Activated naive CD4-positive, alpha-beta T cell treated with anti-CD3 and anti-CD28 coated beads for 36 hours (primary cell): ENCODE measurements at regions of chr16 and their contacts with region 1.

Region 1: DNA sequence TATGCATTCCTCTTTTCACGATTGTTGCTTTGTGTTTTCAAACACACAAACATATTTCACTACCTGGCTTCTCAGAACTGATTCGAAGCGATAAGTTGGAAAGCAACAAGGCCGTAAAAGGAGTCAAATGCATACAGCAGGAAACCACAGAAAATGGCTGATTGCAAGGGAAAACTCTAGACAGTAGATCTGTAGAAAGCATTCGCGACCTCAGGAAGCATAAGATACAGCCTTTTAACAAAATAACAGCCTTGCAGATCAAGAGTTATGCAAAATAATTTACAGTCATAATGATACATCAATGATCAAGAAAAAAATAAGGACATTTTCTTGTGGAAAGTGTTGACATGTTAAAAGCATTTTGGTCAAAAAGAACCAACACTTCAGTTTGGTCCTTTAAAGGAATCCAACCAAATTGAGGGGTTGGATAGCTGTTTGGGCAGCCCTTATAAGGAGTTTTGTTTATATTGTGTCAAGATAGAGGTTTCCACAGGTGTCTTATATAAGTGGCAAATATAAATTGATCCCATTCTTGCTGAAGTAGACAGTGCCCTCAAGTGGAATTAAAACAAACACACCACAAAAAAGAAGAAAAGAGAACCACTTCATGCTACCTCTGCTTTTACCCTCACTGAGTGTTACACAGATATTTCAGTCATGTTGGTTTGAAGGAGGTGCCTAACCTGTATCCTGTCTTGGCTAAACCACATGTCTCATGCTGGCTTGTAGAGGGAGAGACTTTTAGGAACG is 5.5 kb downstream of the CYLD start:
- DNase-seq: peak; percentile 27
- H3K4me3 Mint-ChIP-seq: peak overlapping the region; percentile 67
- H3K27ac Mint-ChIP-seq: peak overlapping the region; percentile 93
- H3K4me1 Mint-ChIP-seq: peaks cover 62% of the 10 kb centered on the region
- H3K27me3 Mint-ChIP-seq: no peaks in the 10 kb centered on the region

Region 2: DNA sequence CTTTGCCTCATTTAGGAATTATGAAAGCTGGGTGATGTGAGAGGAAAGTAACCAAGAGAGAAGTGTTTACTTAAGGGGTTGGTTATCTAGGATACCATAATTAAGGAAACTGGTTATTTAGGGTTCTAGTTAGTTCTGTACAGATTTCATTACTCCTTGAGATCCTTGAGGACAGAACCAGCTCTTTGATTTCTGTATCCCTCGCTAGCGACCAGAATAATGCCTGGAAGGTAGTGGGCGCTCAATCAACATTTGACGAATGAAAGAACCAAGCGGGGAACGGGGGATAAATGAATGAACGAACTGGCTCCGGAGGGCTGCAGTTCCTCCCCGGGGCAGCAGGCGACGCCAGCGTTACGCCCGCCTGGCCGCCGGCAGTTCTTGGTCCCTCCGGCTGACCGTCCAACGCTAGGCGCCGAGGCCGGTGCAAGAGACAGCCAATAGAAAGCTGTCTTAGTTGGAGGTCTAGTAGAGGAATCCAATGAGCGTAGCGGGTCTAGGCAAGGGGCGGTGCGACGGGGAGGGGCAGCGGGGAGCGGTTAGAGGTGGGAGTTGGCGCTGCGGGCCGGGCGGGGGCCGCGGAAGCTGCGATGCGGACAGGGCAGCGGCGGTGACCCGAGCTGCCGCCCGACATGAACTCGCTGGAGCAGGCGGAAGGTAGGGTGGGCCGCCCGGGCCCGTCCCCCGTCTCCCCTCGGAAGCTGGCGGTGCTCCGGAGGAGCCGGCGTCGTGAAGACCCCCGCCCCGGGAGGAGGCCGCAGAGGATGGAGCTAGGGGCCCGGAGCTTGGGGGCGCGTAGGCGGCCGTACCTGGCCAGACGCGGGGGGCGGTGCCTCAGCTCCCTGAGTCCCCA is 722.5 kb before region 1 on chr16 and contains the start of gene CNEP1R1:
- CTCF ChIA-PET with region 1: no interaction called
- intact Hi-C with region 1: loop called (anchors 2 kb)
- DNase-seq: peak; percentile 94
- H3K4me3 Mint-ChIP-seq: peak within 1 kb of the TSS; percentile 91
- H3K27ac Mint-ChIP-seq: peak within 1 kb of the TSS; percentile 82
- H3K4me1 Mint-ChIP-seq: peaks cover 22% of the 10 kb centered on the region
- H3K27me3 Mint-ChIP-seq: no peaks in the 10 kb centered on the region
- total RNA-seq, gene CNEP1R1: 28.2 to 30.9 TPM

Region 3: DNA sequence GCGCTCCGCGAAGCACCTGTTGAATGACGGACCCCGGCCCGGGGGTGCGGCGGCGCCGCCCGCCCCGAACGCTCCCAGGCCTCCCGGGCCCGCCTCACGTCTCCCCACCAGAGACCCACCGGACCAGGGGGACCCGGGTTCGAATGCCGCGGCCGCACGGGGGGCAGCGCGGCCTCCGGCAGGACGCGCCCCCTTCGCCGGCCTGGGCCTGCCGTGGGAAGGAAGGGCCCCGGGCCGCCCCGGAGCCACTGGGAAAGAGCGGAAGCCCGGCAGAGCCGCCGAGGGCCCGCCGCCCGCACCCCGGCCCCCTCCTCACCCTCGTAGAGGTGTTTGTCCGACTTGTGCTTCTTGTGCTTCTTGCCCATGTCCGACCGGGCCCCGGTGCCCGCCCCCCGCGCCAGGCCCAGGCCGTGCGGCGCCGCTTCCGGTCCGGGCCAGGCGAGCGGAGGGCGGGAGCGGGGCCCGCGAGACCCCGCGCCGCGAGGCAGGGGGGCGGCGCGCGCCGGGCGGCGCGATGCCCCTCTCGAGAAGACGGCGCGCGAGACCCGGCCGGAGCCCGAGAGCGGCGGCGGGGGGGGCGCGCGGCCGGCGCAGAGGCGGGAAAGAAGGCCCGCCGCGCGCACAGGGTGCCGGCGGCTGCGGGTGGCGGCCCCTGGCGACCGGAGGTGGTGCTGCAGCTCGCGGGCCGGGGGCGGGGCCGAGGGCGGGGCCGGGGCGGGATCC is 378.8 kb before region 1 on chr16 and contains the start of gene BRD7:
- CTCF ChIA-PET with region 1: no interaction called
- intact Hi-C with region 1: loop called (anchors 1 kb)
- DNase-seq: peak; percentile 62
- H3K4me3 Mint-ChIP-seq: peak within 1 kb of the TSS; percentile 96
- H3K27ac Mint-ChIP-seq: peak within 1 kb of the TSS; percentile 86
- H3K4me1 Mint-ChIP-seq: peaks cover 46% of the 10 kb centered on the region
- H3K27me3 Mint-ChIP-seq: no peaks in the 10 kb centered on the region
- total RNA-seq, gene BRD7: 96.7 to 101 TPM

Region 4: DNA sequence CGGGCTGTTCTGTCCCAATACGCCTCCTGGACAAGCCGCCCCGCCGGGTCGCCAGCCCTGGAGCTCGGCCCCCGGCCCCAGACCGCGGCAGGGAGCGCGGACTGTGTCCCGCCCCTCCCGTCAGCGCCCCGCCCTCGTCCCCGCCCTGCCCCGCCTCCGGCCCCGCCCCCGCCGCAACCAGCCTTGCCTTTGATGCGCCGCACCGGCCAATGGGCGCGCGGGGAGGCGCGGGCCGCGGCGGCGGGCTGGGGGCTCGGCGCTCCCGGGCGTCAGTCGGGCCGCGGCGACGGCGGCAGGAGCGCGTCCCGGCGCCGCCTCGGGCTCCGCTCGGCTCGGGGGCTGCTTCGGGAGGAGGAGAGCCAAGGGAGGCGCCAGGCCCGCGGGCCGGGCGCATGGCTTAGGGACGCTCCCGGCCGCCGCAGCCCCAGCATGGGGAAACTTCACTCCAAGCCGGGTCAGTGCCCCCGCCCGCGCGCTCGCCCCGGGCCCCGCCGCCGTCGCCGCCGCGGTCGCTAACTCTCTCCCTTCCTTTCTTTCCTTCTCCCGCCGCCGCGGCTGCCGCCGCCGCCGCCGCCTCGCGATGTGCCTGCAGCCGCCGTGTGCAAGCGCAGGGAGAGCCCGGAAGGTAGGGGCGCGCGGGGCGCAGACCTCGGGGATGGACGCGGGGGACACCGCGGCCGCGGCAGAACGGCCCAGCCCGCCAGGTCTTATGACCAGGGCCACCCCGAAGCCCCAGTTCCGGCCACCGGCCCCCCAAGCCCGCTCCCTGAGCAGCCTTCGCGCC is 199.1 kb before region 1 on chr16 and contains the start of gene NKD1:
- CTCF ChIA-PET with region 1: no interaction called
- intact Hi-C with region 1: loop called (anchors 1 kb)
- DNase-seq: peak; percentile 68
- H3K4me3 Mint-ChIP-seq: peak within 1 kb of the TSS; percentile 85
- H3K27ac Mint-ChIP-seq: no peak within 1 kb of the TSS
- H3K4me1 Mint-ChIP-seq: peaks cover 18% of the 10 kb centered on the region
- H3K27me3 Mint-ChIP-seq: no peaks in the 10 kb centered on the region
- total RNA-seq, gene NKD1: 2.6 to 3.2 TPM

Region 5: DNA sequence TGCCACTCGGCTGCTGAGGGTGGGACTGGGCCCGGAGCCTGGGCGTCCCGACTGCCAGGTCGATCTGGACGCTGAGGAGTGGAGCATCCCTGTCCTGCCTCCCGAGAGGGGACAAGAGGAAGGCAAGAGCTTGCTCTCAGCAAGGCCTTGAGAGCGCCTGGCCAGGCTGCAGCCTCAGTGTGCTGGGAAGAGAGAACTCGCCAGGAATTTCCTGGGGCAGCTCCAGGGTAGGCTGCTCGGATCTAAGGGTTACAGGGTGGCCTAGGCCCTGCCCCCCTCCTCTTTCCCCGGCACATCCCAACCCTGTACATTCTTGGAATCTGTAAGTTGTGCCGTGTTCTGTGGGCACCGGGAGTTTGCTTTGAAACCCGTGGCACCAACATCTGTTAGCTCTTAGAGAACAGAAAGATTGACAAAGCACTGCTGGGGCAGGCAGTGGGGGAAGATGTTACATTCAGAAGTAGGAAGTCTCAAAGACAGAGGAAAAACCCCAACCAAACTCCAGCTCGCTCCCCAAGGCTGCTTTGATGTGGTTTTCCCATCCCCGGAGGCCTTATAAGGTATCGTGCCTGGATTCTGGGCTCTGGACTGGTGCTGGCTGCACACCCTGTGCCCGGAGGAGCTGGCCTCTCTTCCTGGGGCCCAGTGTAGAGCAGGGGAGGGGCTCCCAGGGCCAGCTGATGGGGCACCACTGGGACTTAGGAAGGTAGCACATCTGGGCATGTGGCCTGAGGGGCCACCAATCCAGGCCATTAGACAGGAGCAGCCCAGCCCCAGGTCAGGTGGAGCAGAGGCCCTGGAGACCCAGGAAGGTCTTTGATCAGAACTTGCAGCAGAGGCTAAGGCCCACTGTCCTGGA is 143.9 kb before region 1 on chr16:
- CTCF ChIA-PET with region 1: no interaction called
- intact Hi-C with region 1: loop called (anchors 5 kb)
- DNase-seq: peak; percentile 38
- H3K4me3 Mint-ChIP-seq: no peak overlapping the region
- H3K27ac Mint-ChIP-seq: peak overlapping the region; percentile 67
- H3K4me1 Mint-ChIP-seq: peaks cover 44% of the 10 kb centered on the region
- H3K27me3 Mint-ChIP-seq: no peaks in the 10 kb centered on the region

Region 6: GRCh38 chr16:50657241-50657640 is 90.1 kb before region 1 on chr16:
- CTCF ChIA-PET with region 1: no interaction called
- intact Hi-C with region 1: no loop called
- DNase-seq: no peak
- H3K4me3 Mint-ChIP-seq: no peak overlapping the region
- H3K27ac Mint-ChIP-seq: no peak overlapping the region
- H3K4me1 Mint-ChIP-seq: no peaks in the 10 kb centered on the region
- H3K27me3 Mint-ChIP-seq: no peaks in the 10 kb centered on the region

Region 7: DNA sequence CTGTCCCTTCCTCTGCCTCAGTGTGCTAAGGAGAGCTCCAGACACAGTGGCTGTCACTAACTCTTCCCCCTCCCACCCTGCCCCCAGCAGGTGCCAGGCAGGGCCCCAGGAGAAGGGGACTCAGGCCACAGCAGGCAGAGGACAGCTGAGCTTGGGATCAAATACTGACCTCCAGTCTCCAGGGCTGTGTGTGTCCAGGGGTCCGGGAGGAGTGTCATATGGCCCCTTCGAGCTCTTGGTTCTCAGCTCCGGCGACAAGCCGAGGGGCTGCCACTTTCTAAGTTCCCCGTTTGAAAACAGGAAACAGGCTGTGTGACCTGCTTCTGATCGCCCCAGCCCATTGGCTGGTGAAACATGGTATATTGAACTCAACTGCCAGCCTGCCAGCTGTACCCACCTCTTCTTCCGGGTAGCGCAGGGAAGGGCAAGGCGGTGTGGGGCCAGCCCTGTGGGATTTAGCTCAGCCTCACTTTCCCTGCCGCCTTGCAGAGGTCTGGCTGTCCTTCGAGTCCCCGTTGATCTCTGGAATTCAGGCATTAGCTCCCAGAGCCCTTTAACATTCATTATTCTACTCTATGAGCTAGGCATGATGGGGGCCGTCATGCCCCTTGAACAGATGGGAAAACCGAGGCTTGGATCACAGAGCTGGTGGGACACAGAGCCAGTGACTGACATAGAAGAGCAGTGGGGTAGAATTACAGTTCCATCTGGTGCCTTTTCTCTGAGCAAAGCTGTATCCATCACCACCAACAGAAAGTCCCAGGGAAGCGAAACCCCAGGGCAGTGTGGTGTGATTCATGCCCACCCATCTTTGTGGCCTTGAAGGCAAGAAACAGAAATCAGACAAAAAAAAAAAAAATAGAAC is 66.1 kb before region 1 on chr16 and contains the start of gene SNX20:
- CTCF ChIA-PET with region 1: interaction called, 532 read pairs
- intact Hi-C with region 1: loop called (anchors 1 kb)
- DNase-seq: peak; percentile 78
- H3K4me3 Mint-ChIP-seq: peak within 1 kb of the TSS; percentile 83
- H3K27ac Mint-ChIP-seq: peak within 1 kb of the TSS; percentile 93
- H3K4me1 Mint-ChIP-seq: peaks cover 81% of the 10 kb centered on the region
- H3K27me3 Mint-ChIP-seq: no peaks in the 10 kb centered on the region
- total RNA-seq, gene SNX20: 29.6 to 30.3 TPM

Region 8: DNA sequence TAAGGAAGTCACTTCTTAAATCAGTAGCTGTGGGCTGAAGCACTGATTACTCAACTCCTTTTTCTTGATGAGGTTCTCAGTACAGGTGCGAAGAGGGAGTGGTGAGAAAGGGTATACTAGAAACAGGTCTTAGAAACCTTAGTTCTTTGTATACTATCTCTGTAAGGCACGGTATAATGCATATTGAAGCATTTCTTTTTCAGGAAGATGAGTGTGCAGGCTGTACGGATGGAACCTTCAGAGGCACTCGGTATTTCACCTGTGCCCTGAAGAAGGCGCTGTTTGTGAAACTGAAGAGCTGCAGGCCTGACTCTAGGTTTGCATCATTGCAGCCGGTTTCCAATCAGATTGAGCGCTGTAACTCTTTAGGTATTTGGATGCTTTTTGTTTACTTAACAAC is 33.7 kb after region 1 on chr16:
- CTCF ChIA-PET with region 1: interaction called, 5 read pairs
- intact Hi-C with region 1: loop called (anchors 5 kb)
- DNase-seq: peak; percentile 48
- H3K4me3 Mint-ChIP-seq: peak overlapping the region; percentile 18
- H3K27ac Mint-ChIP-seq: peak overlapping the region; percentile 70
- H3K4me1 Mint-ChIP-seq: peaks cover 51% of the 10 kb centered on the region
- H3K27me3 Mint-ChIP-seq: no peaks in the 10 kb centered on the region

Region 9: GRCh38 chr16:50861970-50862411 is 114.6 kb after region 1 on chr16:
- CTCF ChIA-PET with region 1: no interaction called
- intact Hi-C with region 1: no loop called
- DNase-seq: no peak
- H3K4me3 Mint-ChIP-seq: no peak overlapping the region
- H3K27ac Mint-ChIP-seq: no peak overlapping the region
- H3K4me1 Mint-ChIP-seq: no peaks in the 10 kb centered on the region
- H3K27me3 Mint-ChIP-seq: no peaks in the 10 kb centered on the region

Region 10: DNA sequence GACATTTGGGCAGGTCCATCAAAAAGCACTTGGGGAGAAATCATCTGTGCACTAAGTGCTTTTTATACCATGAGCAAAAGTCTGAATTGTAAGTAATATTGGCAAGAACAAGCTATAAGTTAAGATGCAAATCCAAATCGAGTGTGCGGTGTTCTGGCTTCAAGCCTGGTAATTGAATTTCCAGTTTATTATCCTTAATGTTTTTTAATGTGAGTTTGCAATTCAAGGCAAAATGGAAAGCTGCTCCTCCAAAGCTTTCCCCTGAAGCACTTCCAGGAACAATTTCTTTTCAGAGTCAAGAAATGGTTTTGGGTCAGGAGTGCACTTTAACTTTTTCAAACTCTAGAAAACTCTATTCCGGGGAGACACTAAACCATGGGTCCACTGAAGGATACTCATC is 1353.9 kb after region 1 on chr16:
- CTCF ChIA-PET with region 1: no interaction called
- intact Hi-C with region 1: no loop called
- DNase-seq: no peak
- H3K4me3 Mint-ChIP-seq: no peak overlapping the region
- H3K27ac Mint-ChIP-seq: no peak overlapping the region
- H3K4me1 Mint-ChIP-seq: no peaks in the 10 kb centered on the region
- H3K27me3 Mint-ChIP-seq: no peaks in the 10 kb centered on the region